PC-9 (cell line): ENCODE measurements at regions of chr12 and their contacts with region 1.

Region 1: DNA sequence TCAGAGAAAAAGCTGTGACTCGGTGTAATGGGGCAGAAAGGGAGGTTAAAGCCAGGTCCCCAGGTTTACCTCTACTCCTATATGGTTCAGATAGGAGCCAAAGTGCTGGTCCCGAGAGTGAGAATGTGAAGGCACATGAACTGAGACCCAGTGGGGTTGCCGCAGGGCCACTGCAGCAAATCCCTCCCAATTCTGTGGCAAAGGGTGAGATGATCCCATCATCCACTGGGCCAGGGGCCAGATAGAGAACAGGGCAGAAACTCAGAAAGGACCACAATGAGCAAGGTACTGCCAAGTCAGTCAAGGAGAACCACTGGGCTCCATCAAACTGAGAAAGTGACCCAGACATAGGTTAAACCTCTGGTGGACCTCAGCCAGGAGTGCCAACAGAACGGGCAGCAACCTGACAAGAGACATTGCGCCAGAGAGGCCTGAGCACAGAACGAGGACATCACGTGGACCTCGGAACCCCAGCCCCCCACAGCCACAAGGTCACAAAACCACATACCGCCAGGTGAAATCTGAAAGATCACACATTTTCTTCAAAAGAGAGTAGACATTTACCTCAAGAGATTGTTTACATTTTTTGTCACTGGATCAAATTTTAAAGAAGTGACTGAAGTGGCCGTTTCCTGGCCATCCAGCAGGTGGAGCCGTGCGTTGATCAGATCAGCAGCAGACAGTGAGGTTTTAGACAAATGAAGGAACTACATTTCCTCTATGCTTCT is 20.5 kb upstream of the ITPR2 start:
- DNase-seq: peak in 1 of 2 experiments; percentile 71
- H3K4me3 ChIP-seq: no peak overlapping the region
- H3K27ac ChIP-seq: no peak overlapping the region
- H3K4me1 ChIP-seq: peaks cover 5% of the 10 kb centered on the region
- H3K27me3 ChIP-seq: no peaks in the 10 kb centered on the region
- CTCF ChIP-seq: peak; percentile 83

Region 2: GRCh38 chr12:26884765-26885576 is 31.5 kb after region 1 on chr12:
- CTCF ChIA-PET with region 1: interaction called, 3 read pairs
- POLR2A ChIA-PET with region 1: no interaction called
- intact Hi-C with region 1: loop called (anchors 1 kb)
- DNase-seq: peak; percentile 81 to 90
- H3K4me3 ChIP-seq: no peak overlapping the region
- H3K27ac ChIP-seq: no peak overlapping the region
- H3K4me1 ChIP-seq: no peaks in the 10 kb centered on the region
- H3K27me3 ChIP-seq: no peaks in the 10 kb centered on the region
- CTCF ChIP-seq: peak; percentile 95

Region 3: DNA sequence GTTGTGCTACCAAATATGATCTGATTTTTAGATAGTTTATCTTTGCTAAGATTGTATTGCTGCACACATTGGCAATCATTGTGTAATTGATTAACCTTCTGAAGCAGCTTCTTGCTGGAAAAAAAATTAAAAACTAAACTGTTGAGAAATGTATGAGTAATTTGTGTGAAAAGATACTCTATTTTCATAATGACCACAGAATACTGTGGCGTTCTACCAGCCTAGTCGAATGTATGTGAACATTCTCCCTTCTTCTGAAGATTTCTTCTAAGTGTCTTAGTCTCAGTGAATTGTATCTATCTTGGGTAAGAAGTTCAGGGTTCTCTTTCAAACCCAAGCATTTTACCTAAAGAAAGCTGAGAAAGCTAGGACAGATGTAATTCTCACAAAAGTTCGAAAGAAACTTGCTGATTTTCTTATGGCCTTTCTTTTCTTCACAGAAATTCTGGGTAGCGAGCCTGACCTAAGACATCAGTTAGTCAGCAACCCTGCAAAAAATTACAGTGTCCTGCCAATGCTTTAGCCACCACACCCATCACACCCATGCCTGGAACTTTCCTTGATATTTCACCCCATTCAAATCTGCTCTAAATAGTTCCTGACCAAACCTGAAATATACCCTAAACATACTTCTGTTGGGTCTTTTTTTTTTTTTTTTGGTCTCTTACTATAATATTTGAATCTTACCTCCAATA is 256.0 kb after region 1 on chr12:
- CTCF ChIA-PET with region 1: no interaction called
- POLR2A ChIA-PET with region 1: no interaction called
- intact Hi-C with region 1: no loop called
- DNase-seq: peak in 1 of 2 experiments; percentile 5
- H3K4me3 ChIP-seq: no peak overlapping the region
- H3K27ac ChIP-seq: no peak overlapping the region
- H3K4me1 ChIP-seq: peaks cover 20% of the 10 kb centered on the region; the same call in 1 of the 2 replicates
- H3K27me3 ChIP-seq: no peaks in the 10 kb centered on the region
- CTCF ChIP-seq: no peak

Region 4: GRCh38 chr12:27703710-27704452 is 850.4 kb after region 1 on chr12:
- CTCF ChIA-PET with region 1: no interaction called
- POLR2A ChIA-PET with region 1: no interaction called
- intact Hi-C with region 1: loop called (anchors 5 kb)
- DNase-seq: peak; percentile 71 to 77
- H3K4me3 ChIP-seq: no peak overlapping the region
- H3K27ac ChIP-seq: peak overlapping the region; percentile 67
- H3K4me1 ChIP-seq: 0 out of 2 replicates have a peak, but pooled peaks cover 3% of the 10 kb centered on the region
- H3K27me3 ChIP-seq: no peaks in the 10 kb centered on the region
- CTCF ChIP-seq: peak; percentile 96